ENCODE measurements at regions of chr3 and their contacts with region 1.

Region 1: DNA sequence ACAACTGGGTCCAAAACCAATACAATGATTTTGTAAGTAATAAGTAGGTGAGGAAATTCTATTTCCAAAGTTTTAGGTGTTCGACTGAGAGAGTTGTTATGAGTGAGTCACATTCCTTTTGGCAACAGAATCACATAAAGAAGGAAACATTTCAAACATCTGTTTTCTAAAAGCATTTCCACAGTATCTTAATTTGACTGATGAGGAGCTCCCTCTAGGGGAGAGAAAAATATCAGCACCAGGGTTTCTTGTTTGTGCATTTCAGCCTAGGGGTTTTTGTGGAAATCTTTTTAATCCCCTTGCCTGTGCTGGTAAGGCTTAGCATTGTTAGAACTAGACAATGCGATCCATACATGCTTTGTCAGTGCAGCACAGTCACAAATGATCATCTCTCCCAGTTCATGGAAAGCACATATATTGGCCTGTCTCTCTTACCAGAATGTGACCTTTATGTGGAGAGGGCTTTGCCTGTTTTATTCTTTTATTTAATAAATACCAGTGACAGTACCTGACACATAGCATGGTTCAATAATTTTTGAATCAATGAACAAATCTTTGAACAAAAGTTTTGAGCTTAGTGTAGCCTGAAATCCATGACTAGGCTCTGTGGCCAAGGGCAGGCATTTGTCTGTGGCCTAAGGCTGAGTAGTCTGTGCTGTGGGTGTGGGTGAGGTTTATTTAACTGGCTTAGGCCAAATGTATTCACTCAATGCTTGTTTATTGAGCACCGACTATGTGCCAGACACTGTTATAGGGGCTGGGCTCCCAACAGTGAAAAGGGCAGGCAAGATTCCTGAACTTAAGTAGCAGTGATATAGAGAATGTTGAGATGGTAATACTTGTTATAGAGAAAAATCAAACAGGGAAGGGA is 21.1 kb upstream of the IQCF6 start:
- DNase-seq: no peak
- ATAC-seq: peak; percentile 71 to 75

Region 2: GRCh38 chr3:51718547-51719409 is 81.3 kb before region 1 on chr3:
- intact Hi-C with region 1: loop called in 1 of 2 experiments (anchors 10 kb)
- DNase-seq: peak; percentile 70
- ATAC-seq: peak; percentile 57 to 78